GM12878 (cell line): ENCODE measurements at regions of chr20 and their contacts with region 1.

Region 1: GRCh38 chr20:47146703-47147102 is 209.8 kb downstream of the ZMYND8 start:
- DNase-seq: no peak
- ATAC-seq: no peak
- H3K4me3 ChIP-seq: no peak overlapping the region
- H3K27ac ChIP-seq: no peak overlapping the region
- H3K4me1 ChIP-seq: no peaks in the 10 kb centered on the region
- H3K27me3 ChIP-seq: peaks cover 0 to 2% of the 10 kb centered on the region in 2 experiments; a peak in 1 of 4 replicates
- CTCF ChIP-seq: no peak
- EP300 ChIP-seq: no peak
- POLR2A ChIP-seq: no peak
- RAD21 ChIP-seq: no peak

Region 2: DNA sequence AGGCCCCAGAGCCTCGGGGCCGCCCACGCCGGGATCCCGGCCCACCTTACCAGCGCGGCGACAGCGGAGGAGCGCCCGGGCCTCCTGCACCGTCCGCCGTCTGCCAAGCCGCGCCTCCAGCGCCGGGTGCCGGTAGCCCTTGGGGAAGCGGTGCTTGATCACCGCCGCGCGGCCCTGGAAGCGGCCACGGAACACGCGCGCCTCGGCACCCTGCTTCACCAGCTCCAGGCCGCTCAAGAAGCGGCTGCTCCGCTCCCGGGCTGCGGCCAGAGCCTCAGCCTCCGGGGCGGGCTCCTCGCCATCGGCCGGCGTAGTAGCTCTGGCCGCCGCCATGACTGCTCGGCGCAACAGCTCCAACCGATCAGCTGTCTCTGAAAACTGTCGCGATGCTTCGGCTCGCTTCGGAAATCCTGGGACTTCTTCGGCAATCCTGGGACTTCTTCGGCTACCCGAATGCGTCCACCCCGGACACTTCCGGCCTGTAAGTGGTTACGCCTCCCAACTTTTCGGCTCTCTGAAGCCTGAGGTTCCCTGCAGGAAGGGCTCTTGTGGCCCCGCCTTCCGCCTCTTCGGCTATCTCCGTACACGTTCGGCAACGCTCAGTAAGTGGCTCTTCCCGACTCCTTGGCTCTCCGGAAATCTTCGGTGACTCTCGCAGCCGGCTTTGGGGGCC is 457.5 kb before region 1 on chr20 and contains the start of gene TP53RK:
- CTCF ChIA-PET with region 1: no interaction called
- POLR2A ChIA-PET with region 1: no interaction called
- RAD21 ChIA-PET with region 1: no interaction called
- SMC1A ChIA-PET with region 1: no interaction called
- in situ Hi-C with region 1: no loop called
- intact Hi-C with region 1: no loop called
- DNase-seq: peak; percentile 97
- ATAC-seq: peak; percentile 97
- H3K4me3 ChIP-seq: peak within 1 kb of the TSS; percentile 78
- H3K27ac ChIP-seq: peak within 1 kb of the TSS; percentile 76
- H3K4me1 ChIP-seq: peaks cover 3% of the 10 kb centered on the region
- H3K27me3 ChIP-seq: no peaks in the 10 kb centered on the region
- CTCF ChIP-seq: peak in 1 of 3 experiments; percentile 26; a peak in 1 of 6 replicates
- EP300 ChIP-seq: no peak
- POLR2A ChIP-seq: peak; percentile 87
- RAD21 ChIP-seq: no peak
- polyA plus RNA-seq, gene TP53RK: 3.8 to 6.2 TPM

Region 3: GRCh38 chr20:46767127-46767761 is 379.5 kb before region 1 on chr20:
- CTCF ChIA-PET with region 1: no interaction called
- POLR2A ChIA-PET with region 1: no interaction called
- RAD21 ChIA-PET with region 1: interaction called, 3 read pairs
- SMC1A ChIA-PET with region 1: no interaction called
- in situ Hi-C with region 1: no loop called
- intact Hi-C with region 1: loop called (anchors 10 kb)
- DNase-seq: no peak
- ATAC-seq: peak; percentile 66
- H3K4me3 ChIP-seq: no peak overlapping the region
- H3K27ac ChIP-seq: no peak overlapping the region
- H3K4me1 ChIP-seq: no peaks in the 10 kb centered on the region
- H3K27me3 ChIP-seq: no peaks in the 10 kb centered on the region; a peak in 1 of 4 replicates
- CTCF ChIP-seq: peak; percentile 53 to 72 (median 63)
- EP300 ChIP-seq: no peak
- POLR2A ChIP-seq: no peak
- RAD21 ChIP-seq: peak; percentile 37; the same call in 1 of the 2 replicates

Region 4: DNA sequence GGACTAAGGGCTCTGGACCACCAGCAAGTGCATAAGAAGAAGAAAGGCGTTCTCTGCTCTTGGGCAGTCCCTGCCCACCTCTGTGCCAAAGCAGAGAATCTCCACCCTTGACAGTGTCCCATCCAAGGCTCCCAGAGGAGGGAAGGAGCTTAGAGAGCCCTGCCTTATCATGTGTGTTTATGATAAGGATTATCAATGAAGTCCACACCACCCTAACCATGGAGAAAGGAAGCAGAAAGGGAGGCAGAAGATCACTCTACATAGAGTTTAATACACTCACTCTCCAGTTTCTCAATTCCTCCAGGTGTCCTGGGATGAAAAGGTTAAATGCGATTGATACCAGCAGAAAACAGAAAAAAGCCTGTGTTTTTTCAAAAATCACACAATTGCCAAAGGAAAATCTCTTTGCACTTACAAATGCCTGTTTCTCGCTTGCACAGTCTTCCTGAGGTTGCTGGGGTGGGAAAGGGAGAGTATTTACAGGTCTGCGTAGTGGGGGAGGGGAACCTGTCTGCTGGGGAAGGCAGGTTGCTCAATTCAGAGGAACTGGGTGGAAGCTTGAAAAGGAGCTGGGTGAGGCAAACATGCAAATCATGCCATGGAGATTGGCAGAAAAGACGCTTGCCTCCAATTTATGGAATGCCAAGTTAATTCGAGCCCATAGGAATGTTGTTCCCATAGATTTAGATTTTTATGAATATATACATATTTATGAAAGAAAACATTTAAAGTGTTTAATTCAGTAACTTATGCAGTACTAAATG is 148.0 kb before region 1 on chr20:
- CTCF ChIA-PET with region 1: no interaction called
- POLR2A ChIA-PET with region 1: no interaction called
- RAD21 ChIA-PET with region 1: no interaction called
- SMC1A ChIA-PET with region 1: no interaction called
- in situ Hi-C with region 1: no loop called
- intact Hi-C with region 1: no loop called
- DNase-seq: no peak
- ATAC-seq: no peak
- H3K4me3 ChIP-seq: no peak overlapping the region
- H3K27ac ChIP-seq: no peak overlapping the region
- H3K4me1 ChIP-seq: peaks cover 3% of the 10 kb centered on the region; the same call in 1 of the 2 replicates
- H3K27me3 ChIP-seq: 0 out of 4 replicates have a peak, but pooled peaks cover 0 to 1% of the 10 kb centered on the region in 2 experiments
- CTCF ChIP-seq: no peak
- EP300 ChIP-seq: no peak
- POLR2A ChIP-seq: no peak
- RAD21 ChIP-seq: no peak